ENCODE measurements at regions of chr19 and their contacts with region 1.

Region 1: GRCh38 chr19:34428549-34429285 is 536 bp downstream of the UBA2 start:
- DNase-seq: peak in 1 of 5 donors; percentile 23
- H3K4me3 ChIP-seq: peak overlapping the region; percentile 72 to 84
- H3K4me3 Mint-ChIP-seq: peak overlapping the region; percentile 96 to 98 (median 97)
- H3K27ac ChIP-seq: peak overlapping the region; percentile 93
- H3K27ac Mint-ChIP-seq: peak overlapping the region; percentile 93 to 98 (median 96)
- H3K4me1 ChIP-seq: peaks cover 38% of the 10 kb centered on the region
- H3K4me1 Mint-ChIP-seq: peaks cover 20 to 42% (median 31%) of the 10 kb centered on the region in 4 donors
- H3K27me3 ChIP-seq: no peaks in the 10 kb centered on the region
- H3K27me3 Mint-ChIP-seq: no peaks in the 10 kb centered on the region

Region 2: DNA sequence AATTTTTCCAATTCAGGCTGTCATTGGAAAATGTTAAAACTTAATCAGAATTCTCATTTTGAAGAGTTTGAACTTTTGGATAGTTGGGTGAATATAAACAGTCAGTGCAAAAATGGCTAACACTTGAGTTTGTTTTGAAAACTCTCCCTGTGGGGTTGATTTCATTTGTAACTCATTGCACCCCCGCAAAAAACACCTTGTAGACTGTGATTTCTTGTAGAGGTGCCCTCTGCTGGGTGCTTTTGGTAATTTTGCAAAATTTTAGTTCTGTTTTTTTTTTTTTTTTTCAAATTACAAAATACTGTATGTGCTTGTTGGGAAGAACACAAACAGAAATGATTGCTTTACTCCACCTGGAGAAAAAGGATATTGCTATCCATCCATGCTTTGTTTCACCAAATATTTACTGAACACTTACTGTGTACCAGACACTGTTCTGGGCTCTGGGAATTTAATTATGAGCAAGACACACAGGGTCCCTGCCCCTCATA is 91.9 kb before region 1 on chr19:
- CTCF ChIA-PET with region 1: interaction called, 3 read pairs
- POLR2A ChIA-PET with region 1: no interaction called
- intact Hi-C with region 1: loop called (anchors 2 kb)
- DNase-seq: peak; percentile 54 to 58 (median 56)
- H3K4me3 ChIP-seq: no peak overlapping the region
- H3K4me3 Mint-ChIP-seq: no peak overlapping the region
- H3K27ac ChIP-seq: no peak overlapping the region
- H3K27ac Mint-ChIP-seq: peak overlapping the region in 6 of 7 donors; percentile 10 to 80 (median 64)
- H3K4me1 ChIP-seq: peaks cover 11% of the 10 kb centered on the region
- H3K4me1 Mint-ChIP-seq: peaks cover 4 to 10% (median 8%) of the 10 kb centered on the region in 4 donors
- H3K27me3 ChIP-seq: no peaks in the 10 kb centered on the region
- H3K27me3 Mint-ChIP-seq: no peaks in the 10 kb centered on the region

Region 3: GRCh38 chr19:34351382-34351826 is 77.3 kb before region 1 on chr19:
- CTCF ChIA-PET with region 1: interaction called, 5 read pairs
- POLR2A ChIA-PET with region 1: interaction called, 3 read pairs
- intact Hi-C with region 1: loop called (anchors 1 kb)
- DNase-seq: peak in 1 of 5 donors; percentile 43
- H3K4me3 ChIP-seq: no peak overlapping the region
- H3K4me3 Mint-ChIP-seq: peak overlapping the region in 5 of 8 donors; percentile 29 to 58 (median 46)
- H3K27ac ChIP-seq: peak overlapping the region; percentile 26
- H3K27ac Mint-ChIP-seq: peak overlapping the region; percentile 47 to 86 (median 73)
- H3K4me1 ChIP-seq: peaks cover 35% of the 10 kb centered on the region
- H3K4me1 Mint-ChIP-seq: peaks cover 14 to 38% (median 20%) of the 10 kb centered on the region in 4 donors
- H3K27me3 ChIP-seq: no peaks in the 10 kb centered on the region
- H3K27me3 Mint-ChIP-seq: no peaks in the 10 kb centered on the region

Region 4: DNA sequence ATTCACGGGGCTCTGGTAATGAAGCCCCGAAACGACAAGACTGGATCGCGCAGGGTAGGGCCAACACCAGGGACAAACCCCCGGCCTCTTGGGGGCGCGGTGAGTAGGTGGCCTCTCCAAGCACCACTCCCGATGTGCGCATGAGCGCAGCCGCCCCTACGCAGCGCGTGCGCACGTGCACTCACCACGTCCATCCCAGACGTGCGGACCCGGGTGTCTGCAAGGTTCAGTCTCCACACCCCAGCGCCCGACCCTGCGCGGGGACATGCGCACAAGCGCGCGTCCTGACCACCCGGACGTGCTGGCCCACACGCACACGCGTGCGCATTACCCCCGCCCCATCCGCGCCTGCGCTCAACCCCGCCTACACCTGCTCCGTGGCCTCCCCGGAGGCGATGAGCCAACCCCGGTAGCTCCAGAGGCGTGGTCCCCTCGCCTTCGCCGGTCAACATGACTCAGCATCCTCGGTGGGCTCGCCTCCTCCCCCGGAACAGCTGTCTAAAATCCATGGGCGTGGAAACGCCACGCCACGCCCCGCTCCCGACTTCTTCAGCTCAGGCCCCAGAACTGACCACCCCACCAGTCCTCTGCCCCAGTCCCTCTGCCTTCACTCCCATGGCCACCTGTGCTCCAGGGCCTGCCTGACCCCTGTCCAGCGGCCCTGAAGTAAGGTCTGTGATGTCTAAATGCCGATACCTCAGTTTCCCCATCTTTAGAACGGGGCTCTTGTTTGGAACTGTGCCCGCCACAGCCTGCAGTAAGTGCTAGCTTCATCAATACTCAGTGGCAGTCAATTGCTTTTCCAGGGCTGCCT is 69.4 kb before region 1 on chr19:
- CTCF ChIA-PET with region 1: interaction called, 16 read pairs
- POLR2A ChIA-PET with region 1: no interaction called
- intact Hi-C with region 1: loop called (anchors 1 kb)
- DNase-seq: peak; percentile 90 to 94 (median 92)
- H3K4me3 ChIP-seq: peak overlapping the region; percentile 52 to 86
- H3K4me3 Mint-ChIP-seq: peak overlapping the region; percentile 82 to 95 (median 90)
- H3K27ac ChIP-seq: peak overlapping the region; percentile 56
- H3K27ac Mint-ChIP-seq: peak overlapping the region; percentile 89 to 97 (median 95)
- H3K4me1 ChIP-seq: peaks cover 20% of the 10 kb centered on the region
- H3K4me1 Mint-ChIP-seq: peaks cover 15 to 35% (median 26%) of the 10 kb centered on the region in 4 donors
- H3K27me3 ChIP-seq: no peaks in the 10 kb centered on the region
- H3K27me3 Mint-ChIP-seq: no peaks in the 10 kb centered on the region

Region 5: GRCh38 chr19:34364830-34365462 is 63.8 kb before region 1 on chr19 and contains the start of gene GPI:
- CTCF ChIA-PET with region 1: interaction called, 16 read pairs
- POLR2A ChIA-PET with region 1: interaction called, 10 read pairs
- intact Hi-C with region 1: no loop called
- DNase-seq: peak; percentile 59 to 68 (median 61)
- H3K4me3 ChIP-seq: peak within 1 kb of the TSS; percentile 76
- H3K4me3 Mint-ChIP-seq: peak within 1 kb of the TSS; percentile 91 to 99 (median 98)
- H3K27ac ChIP-seq: peak within 1 kb of the TSS; percentile 62
- H3K27ac Mint-ChIP-seq: peak within 1 kb of the TSS; percentile 83 to 95 (median 90)
- H3K4me1 ChIP-seq: peaks cover 38% of the 10 kb centered on the region
- H3K4me1 Mint-ChIP-seq: peaks cover 24 to 45% (median 34%) of the 10 kb centered on the region in 4 donors
- H3K27me3 ChIP-seq: no peaks in the 10 kb centered on the region
- H3K27me3 Mint-ChIP-seq: no peaks in the 10 kb centered on the region
- total RNA-seq, gene GPI: 121 to 127 TPM

Region 6: GRCh38 chr19:34404109-34404897 is 24.4 kb before region 1 on chr19 and contains the start of gene PDCD2L:
- CTCF ChIA-PET with region 1: interaction called, 13 read pairs
- POLR2A ChIA-PET with region 1: interaction called, 20 read pairs
- intact Hi-C with region 1: loop called (anchors 1 kb)
- DNase-seq: peak; percentile 87 to 93 (median 89)
- H3K4me3 ChIP-seq: peak within 1 kb of the TSS; percentile 78 to 100
- H3K4me3 Mint-ChIP-seq: peak within 1 kb of the TSS; percentile 88 to 94 (median 92)
- H3K27ac ChIP-seq: peak within 1 kb of the TSS; percentile 74
- H3K27ac Mint-ChIP-seq: peak within 1 kb of the TSS; percentile 82 to 93 (median 85)
- H3K4me1 ChIP-seq: peaks cover 16% of the 10 kb centered on the region
- H3K4me1 Mint-ChIP-seq: peaks cover 4 to 27% (median 17%) of the 10 kb centered on the region in 4 donors
- H3K27me3 ChIP-seq: no peaks in the 10 kb centered on the region
- H3K27me3 Mint-ChIP-seq: no peaks in the 10 kb centered on the region
- total RNA-seq, gene PDCD2L: 8.8 to 12.3 TPM

Region 7: GRCh38 chr19:34501339-34502320 is 72.9 kb after region 1 on chr19:
- CTCF ChIA-PET with region 1: no interaction called
- POLR2A ChIA-PET with region 1: no interaction called
- intact Hi-C with region 1: loop called (anchors 2 kb)
- DNase-seq: peak; percentile 75 to 81 (median 77)
- H3K4me3 ChIP-seq: no peak overlapping the region
- H3K4me3 Mint-ChIP-seq: peak overlapping the region in 2 of 8 donors; percentile 34 to 54
- H3K27ac ChIP-seq: no peak overlapping the region
- H3K27ac Mint-ChIP-seq: peak overlapping the region in 1 of 7 donors; percentile 19
- H3K4me1 ChIP-seq: peaks cover 12% of the 10 kb centered on the region
- H3K4me1 Mint-ChIP-seq: peaks cover 1 to 20% (median 8%) of the 10 kb centered on the region in 4 donors
- H3K27me3 ChIP-seq: no peaks in the 10 kb centered on the region
- H3K27me3 Mint-ChIP-seq: peaks cover 2 to 14% of the 10 kb centered on the region in 2 donors

Region 8: DNA sequence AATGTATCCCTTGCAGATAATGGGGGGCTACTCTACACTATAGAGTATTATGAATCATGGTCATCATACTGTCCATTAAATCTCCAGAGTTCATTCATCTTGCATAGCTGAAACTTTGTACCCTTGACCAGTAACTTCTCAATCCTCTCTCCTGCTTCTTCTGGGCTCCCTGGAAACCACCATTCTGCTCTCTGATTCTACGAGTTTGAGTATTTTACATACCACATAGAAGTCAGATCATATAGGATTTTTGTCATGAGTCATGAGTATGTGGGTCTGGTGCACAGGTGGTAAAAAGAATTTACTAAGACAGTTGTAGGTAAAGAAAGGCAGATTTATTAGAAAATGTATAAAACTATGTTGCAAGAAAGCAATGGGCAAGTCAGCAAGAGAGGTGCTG is 94.7 kb after region 1 on chr19:
- CTCF ChIA-PET with region 1: no interaction called
- POLR2A ChIA-PET with region 1: no interaction called
- intact Hi-C with region 1: no loop called
- DNase-seq: no peak
- H3K4me3 ChIP-seq: no peak overlapping the region
- H3K4me3 Mint-ChIP-seq: no peak overlapping the region
- H3K27ac ChIP-seq: no peak overlapping the region
- H3K27ac Mint-ChIP-seq: no peak overlapping the region
- H3K4me1 ChIP-seq: no peaks in the 10 kb centered on the region
- H3K4me1 Mint-ChIP-seq: no peaks in the 10 kb centered on the region
- H3K27me3 ChIP-seq: no peaks in the 10 kb centered on the region
- H3K27me3 Mint-ChIP-seq: peaks cover 24 to 29% of the 10 kb centered on the region in 2 donors